Gastrocnemius medialis (tissue), 4 donors: ENCODE measurements at regions of chr11 and their contacts with region 1.

Region 1: DNA sequence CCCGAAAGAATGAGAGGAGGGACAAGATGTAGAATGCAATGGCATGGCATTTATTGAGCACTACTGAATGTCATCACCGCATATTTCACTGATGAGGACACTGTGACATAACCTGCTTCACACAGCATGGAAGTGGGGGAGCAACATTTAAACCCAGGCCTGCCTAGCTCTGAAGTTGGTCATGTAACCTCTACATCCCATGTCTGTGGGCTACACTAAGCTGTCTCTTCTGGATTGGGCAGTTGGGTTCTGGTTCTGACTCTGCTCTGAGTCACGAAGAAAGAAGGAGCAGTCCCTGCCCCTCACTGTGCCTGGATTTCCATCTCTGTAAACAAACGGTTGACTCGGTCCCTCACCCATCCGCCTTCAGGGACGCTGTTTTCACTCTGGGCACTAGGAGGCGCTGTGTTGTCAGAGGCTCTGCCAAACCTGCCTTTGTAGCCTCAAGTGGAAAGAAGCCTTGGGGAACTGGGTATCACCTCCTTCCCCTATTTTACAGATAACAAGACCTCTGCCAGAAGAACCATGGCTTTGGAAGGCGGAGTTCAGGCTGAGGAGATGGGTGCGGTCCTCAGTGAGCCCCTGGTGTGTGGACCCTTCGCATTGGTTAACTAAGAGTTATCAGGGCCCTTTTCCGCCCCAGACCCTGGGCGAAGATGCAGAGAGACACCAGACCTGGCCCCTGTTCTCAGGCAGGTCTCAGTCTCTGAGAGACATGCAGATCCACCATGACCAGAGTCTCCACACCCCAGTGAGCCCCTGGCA is 12.7 kb upstream of the ARHGEF17 start:
- DNase-seq: no peak
- ATAC-seq: no peak
- H3K4me3 ChIP-seq: no peak overlapping the region
- H3K27ac ChIP-seq: no peak overlapping the region
- H3K4me1 ChIP-seq: no peaks in the 10 kb centered on the region
- H3K27me3 ChIP-seq: no peaks in the 10 kb centered on the region
- CTCF ChIP-seq: peak; percentile 43 to 72 (median 66)
- POLR2A ChIP-seq: no peak

Region 2: DNA sequence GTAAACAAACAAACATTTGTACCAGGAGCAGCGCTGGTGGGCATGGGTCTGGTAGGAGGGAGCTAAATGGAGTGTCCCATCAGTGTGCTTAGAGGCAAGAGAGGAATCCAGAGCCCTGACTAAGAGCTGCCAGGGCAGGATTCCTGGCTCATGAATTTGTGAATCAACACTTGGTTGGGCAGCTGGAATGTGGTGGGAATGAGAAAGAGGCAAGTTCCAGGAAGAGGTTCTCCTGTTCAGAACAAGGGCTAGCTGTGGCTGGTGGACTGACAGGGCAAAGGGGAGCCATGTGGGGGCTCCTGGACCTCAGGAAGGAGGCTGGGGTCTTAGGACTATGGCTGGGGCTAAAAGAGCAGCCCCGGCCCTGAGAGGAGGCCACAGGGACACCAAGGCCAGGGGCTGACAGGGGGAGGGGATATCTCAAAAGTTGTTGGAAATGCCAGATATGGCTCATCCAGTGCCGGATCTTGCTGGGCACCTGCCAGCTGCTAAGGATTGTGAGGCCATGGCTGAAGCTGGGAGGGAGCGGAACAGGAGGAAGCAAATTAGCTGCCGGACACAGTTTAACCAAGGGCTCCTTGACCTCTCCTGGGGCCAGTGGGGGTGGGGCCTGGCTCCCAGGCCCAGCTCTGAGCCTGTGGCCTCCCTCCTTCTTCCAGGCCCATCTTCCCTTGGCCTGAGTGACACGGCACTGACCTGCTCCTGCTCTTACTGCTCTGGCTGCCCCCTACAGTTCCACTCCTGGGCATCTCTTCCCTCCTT is 37.9 kb before region 1 on chr11:
- in situ Hi-C with region 1: no loop called
- intact Hi-C with region 1: no loop called
- DNase-seq: peak in 1 of 2 donors; percentile 25
- ATAC-seq: peak in 1 of 2 donors; percentile 39
- H3K4me3 ChIP-seq: no peak overlapping the region
- H3K27ac ChIP-seq: peak overlapping the region in 3 of 4 donors; percentile 3 to 30 (median 15)
- H3K4me1 ChIP-seq: peaks cover 12 to 17% of the 10 kb centered on the region in 2 donors
- H3K27me3 ChIP-seq: no peaks in the 10 kb centered on the region
- CTCF ChIP-seq: no peak
- POLR2A ChIP-seq: no peak

Region 3: DNA sequence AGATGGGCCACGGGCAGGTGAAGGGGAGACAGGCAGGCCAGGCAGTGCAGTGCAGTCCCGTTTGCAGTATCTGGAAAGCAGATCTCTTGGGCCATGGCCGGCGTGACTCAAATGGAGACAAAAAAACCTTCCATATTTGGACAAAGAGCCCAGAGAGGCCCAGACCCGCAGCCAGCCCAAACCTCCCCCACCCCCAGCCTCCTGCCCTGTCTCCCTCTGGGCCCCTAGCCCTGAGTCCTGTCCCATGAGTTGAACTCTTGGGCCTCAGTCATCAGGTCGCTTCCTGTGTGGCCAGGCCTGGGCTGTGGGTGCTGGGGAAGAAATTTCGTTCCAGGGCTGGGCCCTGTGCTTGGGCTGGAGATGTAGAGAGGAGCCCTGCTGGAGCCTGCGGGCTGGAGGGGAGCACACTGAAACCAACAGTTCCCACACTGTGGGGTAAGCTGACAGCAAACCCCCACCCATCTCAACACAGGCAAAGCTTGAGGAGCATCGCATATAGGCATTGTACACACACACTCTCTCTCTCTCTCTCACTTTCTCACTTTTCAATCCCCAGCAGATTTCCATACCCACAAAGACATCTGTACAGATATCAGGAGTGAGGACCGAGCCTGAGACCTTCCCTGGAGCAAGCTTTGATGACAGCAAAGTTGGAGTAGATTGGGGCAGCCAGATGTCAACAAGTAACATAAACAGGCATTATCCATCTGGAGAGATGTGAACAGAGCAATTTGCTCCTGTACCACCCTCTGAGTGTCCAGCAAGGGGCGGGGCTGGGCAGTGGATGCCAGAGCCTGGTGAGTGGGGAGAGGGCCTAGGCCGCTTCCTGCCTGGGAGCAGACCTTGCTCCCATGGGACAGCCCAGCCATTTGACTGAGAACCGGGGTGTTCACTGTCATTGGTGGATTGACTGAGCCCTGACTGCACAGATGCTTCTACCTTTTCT is 29.9 kb after region 1 on chr11:
- in situ Hi-C with region 1: no loop called
- intact Hi-C with region 1: no loop called
- DNase-seq: no peak
- ATAC-seq: peak in 1 of 2 donors; percentile 32
- H3K4me3 ChIP-seq: no peak overlapping the region
- H3K27ac ChIP-seq: peak overlapping the region; percentile 66 to 74 (median 70)
- H3K4me1 ChIP-seq: peaks cover 22 to 40% of the 10 kb centered on the region in 2 donors
- H3K27me3 ChIP-seq: no peaks in the 10 kb centered on the region
- CTCF ChIP-seq: no peak
- POLR2A ChIP-seq: no peak

Region 4: DNA sequence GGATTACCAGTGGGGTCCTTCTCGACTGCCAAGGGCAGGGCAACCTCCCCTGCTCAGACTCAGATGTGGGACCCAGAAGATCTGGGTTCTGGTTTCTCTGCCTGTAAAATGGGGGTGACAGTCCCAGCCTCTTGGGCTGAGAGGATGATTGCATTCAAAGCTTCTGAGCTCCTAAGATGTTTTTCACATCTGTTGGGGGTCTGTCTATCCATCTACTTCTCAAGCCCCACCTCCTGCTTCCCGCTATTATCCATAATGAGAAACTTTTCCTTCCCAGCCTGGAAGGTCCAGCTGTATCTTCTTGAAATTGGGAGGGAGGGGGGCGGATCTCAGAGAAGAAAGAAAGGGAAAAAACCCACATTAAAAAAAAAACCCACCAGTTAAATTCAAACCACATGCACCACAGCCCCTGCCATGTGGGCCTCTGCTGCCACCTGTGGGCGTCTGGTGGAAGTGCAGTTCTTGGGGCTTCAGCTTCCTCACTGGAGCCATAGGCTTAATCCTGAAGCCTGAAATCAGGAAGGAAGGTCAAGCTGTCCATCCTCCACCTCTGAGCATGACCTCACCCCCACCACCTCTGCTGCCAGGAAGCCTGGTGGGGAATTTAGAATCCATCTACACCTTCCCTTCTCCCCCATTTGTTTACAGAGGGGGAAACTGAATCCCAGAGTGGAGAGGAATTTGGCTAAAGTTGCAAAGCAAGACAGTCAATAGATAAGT is 40.0 kb after region 1 on chr11:
- in situ Hi-C with region 1: loop called in 3 of 4 experiments (anchors 5 kb)
- intact Hi-C with region 1: no loop called
- DNase-seq: peak; percentile 47 to 76
- ATAC-seq: peak; percentile 74 to 86
- H3K4me3 ChIP-seq: no peak overlapping the region
- H3K27ac ChIP-seq: peak overlapping the region; percentile 27 to 59 (median 45)
- H3K4me1 ChIP-seq: peaks cover 10 to 12% of the 10 kb centered on the region in 2 donors
- H3K27me3 ChIP-seq: no peaks in the 10 kb centered on the region
- CTCF ChIP-seq: peak; percentile 76 to 100 (median 88)
- POLR2A ChIP-seq: no peak

Region 5: DNA sequence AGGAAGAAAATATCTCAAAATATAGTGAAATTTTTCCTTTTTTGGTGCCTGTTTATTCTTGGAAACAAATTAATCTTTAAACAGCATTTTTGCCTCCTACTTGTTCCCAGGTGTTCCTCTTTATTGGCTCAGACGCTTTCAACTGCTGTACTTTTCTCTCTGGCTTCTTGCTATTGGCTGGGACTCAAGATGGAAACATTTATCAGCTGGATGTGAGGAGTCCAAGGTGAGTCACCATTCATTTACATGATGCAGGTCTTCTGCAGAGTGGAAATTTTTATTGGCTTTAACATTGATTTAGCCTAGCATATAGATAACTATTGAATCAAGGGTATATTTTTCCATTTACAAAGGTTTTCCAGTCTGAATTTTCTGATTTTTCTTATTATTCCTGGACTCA is 621.0 kb after region 1 on chr11:
- in situ Hi-C with region 1: no loop called
- intact Hi-C with region 1: no loop called
- DNase-seq: no peak
- ATAC-seq: no peak
- H3K4me3 ChIP-seq: no peak overlapping the region
- H3K27ac ChIP-seq: no peak overlapping the region
- H3K4me1 ChIP-seq: no peaks in the 10 kb centered on the region
- H3K27me3 ChIP-seq: no peaks in the 10 kb centered on the region
- CTCF ChIP-seq: no peak
- POLR2A ChIP-seq: no peak